ENCODE measurements at regions of chr19 and their contacts with region 1.

Region 1: GRCh38 chr19:55339048-55339888 is at the start of gene KMT5C:
- DNase-seq: peak; percentile 100
- ATAC-seq: peak; percentile 75
- H3K4me3 ChIP-seq: peak within 1 kb of the TSS; percentile 67 to 80
- H3K4me3 Mint-ChIP-seq: peak within 1 kb of the TSS; percentile 94
- H3K27ac ChIP-seq: peak within 1 kb of the TSS; percentile 94 to 100
- H3K27ac Mint-ChIP-seq: peak within 1 kb of the TSS; percentile 95
- H3K4me1 ChIP-seq: peaks cover 24% of the 10 kb centered on the region
- H3K4me1 Mint-ChIP-seq: peaks cover 20% of the 10 kb centered on the region
- H3K27me3 ChIP-seq: peaks cover 0 to 6% of the 10 kb centered on the region in 2 experiments
- H3K27me3 Mint-ChIP-seq: peaks cover 6% of the 10 kb centered on the region
- CTCF ChIP-seq: no peak
- total RNA-seq, gene KMT5C: 82.0 to 84.4 TPM

Region 2: DNA sequence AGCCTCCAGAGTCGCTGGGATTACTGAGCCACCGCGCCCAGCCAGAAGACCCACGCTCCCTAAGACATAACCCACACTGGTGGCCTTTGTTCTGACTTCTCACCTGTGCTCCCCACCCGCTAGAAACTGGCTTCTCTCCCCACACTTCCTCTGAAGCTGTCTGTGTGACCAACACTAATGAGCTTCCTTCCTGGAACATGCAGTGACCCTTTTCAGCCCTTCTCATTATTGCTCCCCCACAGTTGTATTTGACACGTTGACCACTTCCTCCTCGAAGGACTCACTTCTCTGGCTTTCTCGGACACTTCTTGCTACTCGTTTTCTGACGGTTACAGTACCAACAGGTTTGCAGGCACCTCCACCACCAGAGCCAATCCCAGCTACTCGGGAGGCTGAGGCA is 422.4 kb before region 1 on chr19:
- CTCF ChIA-PET with region 1: no interaction called
- POLR2A ChIA-PET with region 1: no interaction called
- intact Hi-C with region 1: no loop called
- DNase-seq: peak in 3 of 9 experiments; percentile 15 to 51 (median 21)
- ATAC-seq: no peak
- H3K4me3 ChIP-seq: no peak overlapping the region
- H3K4me3 Mint-ChIP-seq: no peak overlapping the region
- H3K27ac ChIP-seq: no peak overlapping the region
- H3K27ac Mint-ChIP-seq: peak overlapping the region; percentile 55
- H3K4me1 ChIP-seq: no peaks in the 10 kb centered on the region
- H3K4me1 Mint-ChIP-seq: peaks cover 5% of the 10 kb centered on the region
- H3K27me3 ChIP-seq: no peaks in the 10 kb centered on the region
- H3K27me3 Mint-ChIP-seq: peaks cover 25% of the 10 kb centered on the region
- CTCF ChIP-seq: no peak

Region 3: DNA sequence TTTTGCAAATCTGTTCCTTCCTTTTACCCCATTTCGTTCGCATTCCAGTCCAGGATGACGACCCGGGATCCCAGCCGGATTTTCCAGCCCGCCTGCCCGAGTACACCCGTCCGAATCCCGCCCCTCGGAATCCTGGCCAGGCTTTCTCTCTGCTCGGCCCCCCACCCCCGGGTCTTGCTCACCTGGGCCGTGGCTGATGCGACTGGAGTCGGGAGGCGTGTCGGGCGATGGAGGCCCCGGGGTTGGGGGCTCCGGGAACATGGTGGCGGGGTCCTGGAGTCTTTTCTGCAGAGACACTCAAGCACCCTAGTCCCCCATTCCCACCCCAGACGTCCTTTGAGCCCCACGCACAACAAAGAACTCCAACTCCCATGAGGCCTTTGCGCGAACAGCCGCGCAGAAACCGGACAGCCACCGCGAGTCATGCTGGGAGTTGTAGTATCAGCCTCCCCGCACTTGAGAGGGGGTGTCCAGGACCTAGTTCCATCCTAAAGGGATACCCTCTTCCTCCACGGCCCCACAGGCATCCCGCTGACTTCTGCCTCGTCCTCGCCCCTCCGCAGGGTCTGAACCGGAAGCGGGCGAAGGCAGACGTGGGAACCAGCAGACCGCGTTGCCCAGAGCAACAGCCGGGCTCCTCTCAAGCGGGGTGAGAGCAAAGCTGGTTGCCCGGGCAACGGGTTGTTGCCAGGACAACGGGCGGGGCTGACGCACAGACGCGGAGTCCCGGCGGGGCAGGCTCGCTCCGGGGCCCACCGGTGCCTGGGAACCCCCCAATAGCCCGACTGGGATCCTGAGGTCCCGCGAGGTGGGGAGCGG is 160.3 kb before region 1 on chr19:
- CTCF ChIA-PET with region 1: no interaction called
- POLR2A ChIA-PET with region 1: no interaction called
- intact Hi-C with region 1: loop called in 1 of 2 experiments (anchors 1 kb)
- DNase-seq: peak; percentile 87 to 99 (median 96)
- ATAC-seq: peak; percentile 79
- H3K4me3 ChIP-seq: peak overlapping the region; percentile 39 to 44
- H3K4me3 Mint-ChIP-seq: peak overlapping the region; percentile 75
- H3K27ac ChIP-seq: peak overlapping the region; percentile 45 to 61
- H3K27ac Mint-ChIP-seq: peak overlapping the region; percentile 79
- H3K4me1 ChIP-seq: peaks cover 27% of the 10 kb centered on the region
- H3K4me1 Mint-ChIP-seq: peaks cover 23% of the 10 kb centered on the region
- H3K27me3 ChIP-seq: peaks cover 43 to 67% of the 10 kb centered on the region in 2 experiments
- H3K27me3 Mint-ChIP-seq: peaks cover 68% of the 10 kb centered on the region
- CTCF ChIP-seq: no peak

Region 4: GRCh38 chr19:55239004-55239740 is 100.1 kb before region 1 on chr19:
- CTCF ChIA-PET with region 1: no interaction called
- POLR2A ChIA-PET with region 1: no interaction called
- intact Hi-C with region 1: no loop called
- DNase-seq: no peak
- ATAC-seq: no peak
- H3K4me3 ChIP-seq: no peak overlapping the region
- H3K4me3 Mint-ChIP-seq: no peak overlapping the region
- H3K27ac ChIP-seq: no peak overlapping the region
- H3K27ac Mint-ChIP-seq: no peak overlapping the region
- H3K4me1 ChIP-seq: no peaks in the 10 kb centered on the region
- H3K4me1 Mint-ChIP-seq: peaks cover 4% of the 10 kb centered on the region
- H3K27me3 ChIP-seq: no peaks in the 10 kb centered on the region
- H3K27me3 Mint-ChIP-seq: no peaks in the 10 kb centered on the region
- CTCF ChIP-seq: no peak

Region 5: GRCh38 chr19:55279770-55280643 is 59.3 kb before region 1 on chr19 and contains the start of gene HSPBP1:
- CTCF ChIA-PET with region 1: interaction called, 3 read pairs
- POLR2A ChIA-PET with region 1: interaction called, 9 read pairs
- intact Hi-C with region 1: loop called (anchors 1 kb)
- DNase-seq: peak; percentile 87 to 98 (median 95)
- ATAC-seq: peak; percentile 86
- H3K4me3 ChIP-seq: peak within 1 kb of the TSS; percentile 73 to 85
- H3K4me3 Mint-ChIP-seq: peak within 1 kb of the TSS; percentile 96
- H3K27ac ChIP-seq: peak within 1 kb of the TSS; percentile 89 to 90
- H3K27ac Mint-ChIP-seq: peak within 1 kb of the TSS; percentile 98
- H3K4me1 ChIP-seq: peaks cover 32% of the 10 kb centered on the region
- H3K4me1 Mint-ChIP-seq: peaks cover 44% of the 10 kb centered on the region
- H3K27me3 ChIP-seq: no peaks in the 10 kb centered on the region
- H3K27me3 Mint-ChIP-seq: no peaks in the 10 kb centered on the region
- CTCF ChIP-seq: no peak
- total RNA-seq, gene HSPBP1: 18.8 to 18.9 TPM

Region 6: DNA sequence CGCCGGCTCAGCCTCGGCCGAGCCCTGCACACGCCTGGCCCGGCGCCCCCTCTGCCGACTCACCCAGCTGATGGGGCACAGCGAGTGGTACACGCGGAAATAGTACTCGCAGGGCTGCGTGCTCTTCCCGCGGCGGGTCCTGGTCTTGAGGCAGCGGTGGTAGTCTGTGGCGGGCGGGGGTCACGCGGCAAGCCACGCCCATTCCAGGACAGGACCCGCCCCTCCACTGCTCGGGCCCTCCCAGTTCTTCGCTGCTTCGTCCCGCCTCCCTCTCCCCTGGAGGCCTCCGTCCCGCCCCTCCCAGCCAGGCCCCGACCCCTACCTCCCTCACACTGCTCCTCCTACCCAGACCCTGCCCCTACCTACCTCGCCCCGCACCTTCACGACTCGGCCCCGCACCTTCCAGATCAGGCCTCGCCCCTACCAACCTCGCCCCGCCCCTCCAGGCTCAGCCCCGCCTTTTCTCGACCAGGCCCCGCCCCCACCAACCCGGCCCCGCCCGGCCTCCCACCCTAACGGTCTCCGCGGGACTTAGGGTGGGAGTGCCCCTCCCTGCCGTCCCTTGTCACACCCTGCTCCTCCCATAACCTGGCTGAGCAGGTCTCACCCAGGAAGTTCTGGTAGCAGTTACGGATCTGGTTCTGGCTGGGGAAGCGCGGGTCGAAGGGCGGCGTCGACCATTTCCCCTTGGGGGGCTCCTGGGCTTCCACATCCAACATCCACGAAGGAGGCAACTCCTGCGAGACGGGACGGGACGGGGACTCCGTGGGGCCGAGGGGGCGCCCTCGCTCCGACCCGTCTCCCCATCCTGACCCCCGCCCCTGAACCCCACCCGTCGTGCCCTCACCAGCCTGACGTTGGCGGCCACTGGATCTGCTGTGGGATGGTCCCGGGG is 14.8 kb after region 1 on chr19:
- CTCF ChIA-PET with region 1: no interaction called
- POLR2A ChIA-PET with region 1: interaction called, 11 read pairs
- intact Hi-C with region 1: loop called (anchors 1 kb)
- DNase-seq: peak; percentile 27 to 83 (median 65)
- ATAC-seq: peak; percentile 89
- H3K4me3 ChIP-seq: peak overlapping the region; percentile 32 to 48
- H3K4me3 Mint-ChIP-seq: peak overlapping the region; percentile 75
- H3K27ac ChIP-seq: no peak overlapping the region
- H3K27ac Mint-ChIP-seq: no peak overlapping the region
- H3K4me1 ChIP-seq: peaks cover 20% of the 10 kb centered on the region
- H3K4me1 Mint-ChIP-seq: peaks cover 20% of the 10 kb centered on the region
- H3K27me3 ChIP-seq: peaks cover 26 to 34% of the 10 kb centered on the region in 2 experiments
- H3K27me3 Mint-ChIP-seq: peaks cover 32% of the 10 kb centered on the region
- CTCF ChIP-seq: no peak

Region 7: DNA sequence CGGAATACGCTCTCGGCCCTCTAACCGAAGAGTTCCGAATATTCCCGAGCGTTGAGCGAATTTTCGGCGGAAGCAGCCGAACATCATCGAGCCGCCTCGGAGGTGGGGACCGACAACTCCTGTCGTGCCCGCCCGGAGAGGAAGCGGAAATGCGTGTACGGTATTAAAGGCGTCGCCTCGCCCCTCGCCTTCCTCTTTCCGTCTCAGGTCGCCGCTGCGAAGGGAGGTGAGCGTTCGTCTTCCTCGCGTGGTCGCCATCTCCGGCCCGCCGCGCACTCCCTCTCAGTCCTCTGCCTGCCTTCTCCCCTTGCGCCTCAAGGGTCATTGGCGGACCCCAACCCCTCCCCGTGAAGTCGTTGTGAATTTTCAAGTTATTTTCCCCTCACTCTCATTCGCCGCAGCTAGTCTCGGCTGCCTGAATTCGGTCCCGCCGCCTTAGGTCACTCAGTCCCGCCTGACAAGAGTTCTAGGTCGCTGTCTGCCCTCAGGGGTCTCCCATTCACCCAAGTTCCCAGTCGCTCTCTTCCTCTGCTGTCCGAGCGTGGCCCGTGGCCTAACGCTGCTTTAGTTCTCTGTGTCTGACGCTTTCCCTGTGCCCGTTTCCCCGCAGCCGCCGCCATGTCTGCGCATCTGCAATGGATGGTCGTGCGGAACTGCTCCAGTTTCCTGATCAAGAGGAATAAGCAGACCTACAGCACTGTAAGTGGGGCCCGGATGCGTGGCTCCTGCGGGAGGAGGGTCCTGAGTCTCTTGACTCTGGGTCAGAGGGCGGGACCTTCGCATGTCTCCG is 46.7 kb after region 1 on chr19 and contains the start of gene RPL28:
- CTCF ChIA-PET with region 1: interaction called, 4 read pairs
- POLR2A ChIA-PET with region 1: interaction called, 9 read pairs
- intact Hi-C with region 1: loop called (anchors 1 kb)
- DNase-seq: peak; percentile 97 to 99 (median 99)
- ATAC-seq: peak; percentile 80
- H3K4me3 ChIP-seq: peak within 1 kb of the TSS; percentile 75 to 94
- H3K4me3 Mint-ChIP-seq: peak within 1 kb of the TSS; percentile 100
- H3K27ac ChIP-seq: peak within 1 kb of the TSS; percentile 95 to 97
- H3K27ac Mint-ChIP-seq: peak within 1 kb of the TSS; percentile 100
- H3K4me1 ChIP-seq: peaks cover 59% of the 10 kb centered on the region
- H3K4me1 Mint-ChIP-seq: peaks cover 75% of the 10 kb centered on the region
- H3K27me3 ChIP-seq: no peaks in the 10 kb centered on the region
- H3K27me3 Mint-ChIP-seq: no peaks in the 10 kb centered on the region
- CTCF ChIP-seq: no peak
- total RNA-seq, gene RPL28: 4,227 to 4,270 TPM

Region 8: DNA sequence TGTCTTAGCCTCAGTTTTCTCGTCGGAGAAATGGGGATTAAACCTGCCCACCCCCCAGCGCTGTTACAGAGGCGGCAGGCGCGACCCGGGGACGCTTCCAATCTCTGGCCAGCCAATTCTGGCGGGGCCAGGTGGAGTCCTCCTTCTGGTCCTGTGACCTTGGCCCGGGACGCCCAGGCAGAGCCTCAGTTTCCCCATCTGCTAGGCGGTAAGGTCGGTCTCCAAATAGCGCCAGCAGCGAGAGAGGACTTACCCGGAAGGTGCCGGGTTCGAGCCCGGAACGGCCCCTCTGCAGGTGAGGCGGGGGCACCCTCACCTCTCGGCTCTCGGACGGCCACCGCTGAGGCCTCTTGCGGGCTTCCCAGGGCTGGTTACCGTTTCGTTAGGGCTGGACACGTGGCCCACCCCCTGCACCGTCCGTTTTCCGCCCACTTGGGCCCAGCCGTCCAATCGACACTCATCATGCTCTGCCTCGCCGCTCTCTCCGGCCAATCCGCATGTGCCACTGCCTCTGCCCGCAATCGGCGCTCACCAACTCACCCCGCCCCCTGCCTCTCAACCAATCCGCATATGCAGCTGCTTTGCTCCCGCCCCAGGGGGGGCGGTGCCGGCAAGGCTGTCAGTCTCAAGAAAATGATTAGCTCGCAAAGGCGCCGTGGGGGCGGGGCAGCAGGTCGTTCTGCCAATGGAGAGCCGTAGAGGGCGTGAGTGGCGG is 122.1 kb after region 1 on chr19 and contains the start of gene ISOC2:
- CTCF ChIA-PET with region 1: no interaction called
- POLR2A ChIA-PET with region 1: interaction called, 5 read pairs
- intact Hi-C with region 1: loop called in 1 of 2 experiments (anchors 1 kb)
- DNase-seq: peak; percentile 100
- ATAC-seq: peak; percentile 96
- H3K4me3 ChIP-seq: peak within 1 kb of the TSS; percentile 90 to 95
- H3K4me3 Mint-ChIP-seq: peak within 1 kb of the TSS; percentile 83
- H3K27ac ChIP-seq: peak within 1 kb of the TSS; percentile 70 to 87
- H3K27ac Mint-ChIP-seq: peak within 1 kb of the TSS; percentile 58
- H3K4me1 ChIP-seq: peaks cover 17% of the 10 kb centered on the region
- H3K4me1 Mint-ChIP-seq: peaks cover 19% of the 10 kb centered on the region
- H3K27me3 ChIP-seq: no peaks in the 10 kb centered on the region
- H3K27me3 Mint-ChIP-seq: no peaks in the 10 kb centered on the region
- CTCF ChIP-seq: no peak
- total RNA-seq, gene ISOC2: 1.5 to 2.1 TPM

Region 9: GRCh38 chr19:55493052-55493649 is 153.9 kb after region 1 on chr19:
- CTCF ChIA-PET with region 1: no interaction called
- POLR2A ChIA-PET with region 1: no interaction called
- intact Hi-C with region 1: no loop called
- DNase-seq: no peak
- ATAC-seq: no peak
- H3K4me3 ChIP-seq: no peak overlapping the region
- H3K4me3 Mint-ChIP-seq: no peak overlapping the region
- H3K27ac ChIP-seq: no peak overlapping the region
- H3K27ac Mint-ChIP-seq: no peak overlapping the region
- H3K4me1 ChIP-seq: no peaks in the 10 kb centered on the region
- H3K4me1 Mint-ChIP-seq: peaks cover 2% of the 10 kb centered on the region
- H3K27me3 ChIP-seq: no peaks in the 10 kb centered on the region
- H3K27me3 Mint-ChIP-seq: peaks cover 7% of the 10 kb centered on the region
- CTCF ChIP-seq: no peak

Region 10: GRCh38 chr19:55516878-55517620 is 177.8 kb after region 1 on chr19:
- CTCF ChIA-PET with region 1: no interaction called
- POLR2A ChIA-PET with region 1: no interaction called
- intact Hi-C with region 1: loop called in 1 of 2 experiments (anchors 1 kb)
- DNase-seq: peak; percentile 77 to 95 (median 90)
- ATAC-seq: peak; percentile 100
- H3K4me3 ChIP-seq: peak overlapping the region; percentile 12 to 60
- H3K4me3 Mint-ChIP-seq: peak overlapping the region; percentile 79
- H3K27ac ChIP-seq: peak overlapping the region; percentile 40 to 74
- H3K27ac Mint-ChIP-seq: peak overlapping the region; percentile 61
- H3K4me1 ChIP-seq: peaks cover 5% of the 10 kb centered on the region
- H3K4me1 Mint-ChIP-seq: peaks cover 3% of the 10 kb centered on the region
- H3K27me3 ChIP-seq: no peaks in the 10 kb centered on the region
- H3K27me3 Mint-ChIP-seq: peaks cover 2% of the 10 kb centered on the region
- CTCF ChIP-seq: peak; percentile 76

Region 11: GRCh38 chr19:55632463-55632834 is 293.2 kb after region 1 on chr19:
- CTCF ChIA-PET with region 1: no interaction called
- POLR2A ChIA-PET with region 1: no interaction called
- intact Hi-C with region 1: no loop called
- DNase-seq: peak; percentile 72 to 95 (median 89)
- ATAC-seq: peak; percentile 46
- H3K4me3 ChIP-seq: no peak overlapping the region
- H3K4me3 Mint-ChIP-seq: peak overlapping the region; percentile 23
- H3K27ac ChIP-seq: no peak overlapping the region
- H3K27ac Mint-ChIP-seq: peak overlapping the region; percentile 63
- H3K4me1 ChIP-seq: peaks cover 31% of the 10 kb centered on the region
- H3K4me1 Mint-ChIP-seq: peaks cover 40% of the 10 kb centered on the region
- H3K27me3 ChIP-seq: no peaks in the 10 kb centered on the region
- H3K27me3 Mint-ChIP-seq: no peaks in the 10 kb centered on the region
- CTCF ChIP-seq: peak; percentile 45